ENCODE measurements at regions of chr4 and their contacts with region 1.

Region 1: GRCh38 chr4:26302031-26302899 is 18.5 kb upstream of the RBPJ start:
- DNase-seq: peak; percentile 81 to 92 (median 88)
- H3K4me3 ChIP-seq: no peak overlapping the region
- H3K4me3 Mint-ChIP-seq: peak overlapping the region in 1 of 2 donors; percentile 42
- H3K27ac ChIP-seq: peak overlapping the region; percentile 57 to 85
- H3K27ac Mint-ChIP-seq: peak overlapping the region; percentile 93 to 98 (median 96)
- H3K4me1 ChIP-seq: peaks cover 24 to 34% of the 10 kb centered on the region in 2 donors
- H3K4me1 Mint-ChIP-seq: peaks cover 31% of the 10 kb centered on the region
- H3K27me3 ChIP-seq: no peaks in the 10 kb centered on the region
- H3K27me3 Mint-ChIP-seq: peaks cover 0 to 4% (median 0%) of the 10 kb centered on the region in 3 donors
- CTCF ChIP-seq: no peak

Region 2: DNA sequence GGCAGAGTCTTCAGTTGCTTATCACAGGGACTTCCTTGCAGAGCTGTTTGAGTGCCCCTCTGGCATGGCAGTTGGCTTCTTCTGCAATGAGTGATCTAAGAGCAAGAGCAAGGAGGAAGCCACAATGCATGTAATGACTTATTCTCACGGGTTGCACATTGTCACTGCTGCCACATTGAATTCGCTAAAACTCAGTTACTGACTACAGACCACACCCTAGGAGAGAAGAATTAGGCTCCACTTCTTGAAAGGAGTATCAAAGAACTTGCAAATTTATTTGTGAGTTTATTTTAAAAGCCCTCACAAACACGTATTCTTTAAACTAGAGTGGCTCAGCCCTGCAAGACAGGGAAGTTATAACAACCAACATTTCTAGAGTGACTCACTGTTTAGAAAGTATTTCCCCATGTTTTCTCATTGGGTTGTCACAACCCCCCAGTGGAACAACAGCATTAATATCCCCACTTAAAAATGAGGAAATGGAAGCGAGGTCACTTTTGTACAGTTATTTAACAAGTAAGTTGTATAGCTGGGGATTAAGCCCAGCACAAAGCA is 13.8 kb before region 1 on chr4:
- intact Hi-C with region 1: loop called in 1 of 2 experiments (anchors 2 kb)
- DNase-seq: peak; percentile 93 to 97 (median 97)
- H3K4me3 ChIP-seq: peak overlapping the region; percentile 8 to 43 (median 36)
- H3K4me3 Mint-ChIP-seq: peak overlapping the region; percentile 42 to 76
- H3K27ac ChIP-seq: peak overlapping the region; percentile 99
- H3K27ac Mint-ChIP-seq: peak overlapping the region; percentile 98 to 100 (median 99)
- H3K4me1 ChIP-seq: peaks cover 41 to 45% of the 10 kb centered on the region in 2 donors
- H3K4me1 Mint-ChIP-seq: peaks cover 30% of the 10 kb centered on the region
- H3K27me3 ChIP-seq: no peaks in the 10 kb centered on the region
- H3K27me3 Mint-ChIP-seq: peaks cover 0 to 2% (median 0%) of the 10 kb centered on the region in 3 donors
- CTCF ChIP-seq: no peak

Measured in CD14-positive monocyte (primary cell).